GM10248 (cell line): ENCODE measurements at regions of chr11 and their contacts with region 1.

Region 1: DNA sequence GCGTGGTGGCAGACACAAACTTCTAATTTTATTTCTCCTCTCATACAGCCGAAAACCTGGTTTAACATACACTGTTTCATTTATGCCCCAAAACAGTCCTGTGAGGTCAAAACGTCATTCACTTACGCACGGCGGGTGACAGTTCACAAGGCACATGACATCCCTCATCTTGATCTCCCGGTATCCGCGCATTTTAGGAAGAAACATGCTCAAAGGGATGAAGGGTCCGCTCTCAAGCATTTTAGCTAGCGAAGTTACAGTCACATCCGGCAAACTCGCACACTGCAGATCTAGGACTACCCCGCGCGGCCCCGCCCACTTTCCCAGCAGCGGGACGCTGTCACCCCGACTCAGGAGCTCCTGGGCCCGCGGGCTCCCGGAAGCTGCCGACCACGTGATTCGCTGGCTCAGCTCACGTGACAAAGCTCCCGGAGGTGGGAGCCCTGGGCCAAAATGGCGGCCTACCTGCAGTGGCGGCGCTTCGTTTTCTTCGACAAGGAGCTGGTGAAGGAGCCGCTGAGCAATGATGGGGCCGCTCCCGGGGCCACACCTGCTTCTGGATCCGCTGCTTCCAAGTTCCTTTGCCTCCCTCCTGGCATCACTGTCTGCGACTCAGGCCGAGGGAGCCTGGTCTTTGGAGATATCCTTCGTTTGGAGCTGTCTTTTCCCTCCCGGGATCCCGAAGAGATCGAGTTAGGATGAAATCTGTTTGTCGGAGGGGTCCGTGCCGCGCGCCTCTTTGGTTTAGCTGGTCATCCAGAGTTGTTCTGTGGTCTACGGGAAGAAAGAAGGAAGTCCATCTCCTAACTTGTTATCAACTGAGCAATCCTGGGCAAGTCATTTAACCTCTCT is at the start of gene VPS11:
- DNase-seq: peak; percentile 99
- CTCF ChIP-seq: no peak

Region 2: DNA sequence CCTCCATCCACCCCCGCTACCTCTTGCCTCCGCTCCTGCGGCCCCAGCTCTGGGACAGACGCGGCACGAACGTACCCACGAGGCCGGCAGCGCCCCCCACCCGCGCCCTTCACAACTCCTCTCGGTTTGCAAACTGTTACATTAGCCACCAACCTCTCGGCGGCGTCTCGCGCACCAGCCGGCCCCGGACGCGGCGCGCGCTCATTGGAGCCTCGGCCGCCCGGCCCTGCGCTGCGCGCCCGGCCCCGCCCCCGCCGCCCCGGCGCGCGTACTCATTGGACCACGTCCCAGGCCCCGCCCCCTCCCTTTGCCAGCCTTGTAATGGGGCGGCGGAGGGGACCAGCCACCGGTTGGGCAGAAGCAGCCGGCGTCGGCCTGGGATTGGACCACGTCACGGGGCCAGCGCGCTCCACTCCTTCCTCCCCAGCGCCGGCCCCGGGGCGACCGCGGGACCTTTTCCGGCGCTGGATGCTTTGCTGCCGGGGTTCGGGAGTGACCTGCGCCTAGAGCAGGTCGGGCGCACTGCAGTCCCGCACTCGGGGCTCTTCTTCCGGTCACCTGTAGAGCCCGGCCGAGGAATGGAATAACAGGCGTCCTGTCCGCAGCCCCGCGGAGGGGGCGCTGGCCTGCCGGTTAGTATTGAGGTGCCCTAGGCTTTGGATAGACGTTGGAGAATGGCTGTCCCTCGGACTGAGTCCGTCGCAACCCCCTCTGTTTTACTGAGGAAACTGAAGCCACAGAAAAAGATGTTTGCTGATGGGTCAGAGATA is 10.4 kb before region 1 on chr11 and contains the start of gene HYOU1:
- CTCF ChIA-PET with region 1: interaction called, 39 read pairs
- POLR2A ChIA-PET with region 1: interaction called, 6 read pairs
- DNase-seq: peak; percentile 99
- CTCF ChIP-seq: peak; percentile 18

Region 3: DNA sequence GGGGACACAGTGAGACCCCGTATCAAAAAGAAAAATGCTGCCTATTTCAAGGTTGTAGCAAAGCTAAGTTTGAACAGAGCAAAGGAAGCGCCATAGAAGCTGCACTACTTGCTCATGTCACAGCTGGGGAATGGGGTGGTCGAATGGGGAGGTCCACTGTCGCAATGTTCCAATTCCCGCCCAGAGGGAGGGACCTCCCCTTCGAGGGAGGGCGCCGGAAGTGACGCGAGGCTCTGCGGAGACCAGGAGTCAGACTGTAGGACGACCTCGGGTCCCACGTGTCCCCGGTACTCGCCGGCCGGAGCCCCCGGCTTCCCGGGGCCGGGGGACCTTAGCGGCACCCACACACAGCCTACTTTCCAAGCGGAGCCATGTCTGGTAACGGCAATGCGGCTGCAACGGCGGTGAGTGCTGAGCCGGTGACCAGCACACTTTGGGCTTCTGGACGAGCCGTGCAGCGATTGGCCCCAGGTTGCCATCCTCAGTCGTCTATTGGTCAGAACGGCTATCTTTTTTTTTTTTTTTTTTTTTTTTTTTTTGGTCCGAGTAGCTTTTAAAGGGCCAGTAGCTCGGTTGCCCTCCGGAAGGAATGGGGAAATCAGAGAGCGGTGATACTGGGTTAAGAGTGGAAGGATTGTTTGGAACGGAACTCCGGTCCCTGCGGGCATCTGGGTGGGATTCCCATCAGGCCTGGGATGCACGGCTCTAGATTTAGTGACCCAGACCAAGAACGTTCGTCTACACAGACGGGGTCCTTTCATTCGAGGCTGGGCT is 17.3 kb after region 1 on chr11 and contains the start of gene HMBS:
- CTCF ChIA-PET with region 1: interaction called, 5 read pairs
- POLR2A ChIA-PET with region 1: interaction called, 31 read pairs
- DNase-seq: peak; percentile 92
- CTCF ChIP-seq: no peak

Region 4: DNA sequence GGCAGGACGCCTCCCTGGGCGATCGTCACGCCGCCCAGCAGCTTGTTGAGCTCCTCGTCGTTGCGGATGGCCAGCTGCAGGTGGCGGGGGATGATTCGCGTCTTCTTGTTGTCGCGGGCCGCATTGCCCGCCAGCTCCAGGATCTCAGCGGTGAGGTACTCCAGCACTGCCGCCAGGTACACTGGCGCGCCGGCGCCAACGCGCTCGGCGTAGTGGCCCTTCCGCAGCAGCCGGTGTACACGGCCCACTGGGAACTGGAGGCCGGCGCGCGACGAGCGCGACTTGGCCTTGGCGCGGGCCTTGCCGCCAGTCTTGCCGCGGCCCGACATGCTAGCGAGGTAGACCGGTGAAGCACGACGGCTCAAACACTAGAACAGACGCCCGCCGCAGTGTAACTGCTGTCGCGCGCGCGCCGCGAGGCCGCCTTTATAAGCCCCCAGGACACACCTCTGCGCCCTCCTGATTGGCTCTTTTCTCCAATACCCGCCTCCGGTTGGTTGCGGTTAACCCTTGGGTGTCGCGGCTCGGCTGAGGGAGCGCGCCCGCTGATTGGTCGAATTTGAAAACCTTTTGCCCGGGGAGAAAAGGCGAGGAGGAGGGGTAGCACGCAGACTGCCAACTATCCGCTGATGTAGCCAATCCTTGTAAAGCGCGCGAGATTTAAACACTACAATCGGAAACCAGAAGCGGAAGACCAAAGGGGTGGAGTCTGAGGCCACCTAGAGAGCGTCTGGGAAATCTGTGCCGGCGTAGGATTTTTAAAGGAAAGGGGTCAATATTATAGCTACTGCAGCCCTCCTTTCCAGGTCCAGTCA is 27.7 kb after region 1 on chr11:
- CTCF ChIA-PET with region 1: interaction called, 4 read pairs
- POLR2A ChIA-PET with region 1: interaction called, 15 read pairs
- DNase-seq: peak; percentile 98
- CTCF ChIP-seq: no peak